Mammary epithelial cell (primary cell): ENCODE measurements at regions of chr15 and their contacts with region 1.

Region 1: GRCh38 chr15:100968050-100968966 is 49.2 kb downstream of the LRRK1 start:
- DNase-seq: peak; percentile 46
- H3K4me3 ChIP-seq: no peak overlapping the region
- H3K27ac ChIP-seq: no peak overlapping the region
- H3K4me1 ChIP-seq: no peaks in the 10 kb centered on the region
- H3K27me3 ChIP-seq: no peaks in the 10 kb centered on the region
- CTCF ChIP-seq: no peak

Region 2: DNA sequence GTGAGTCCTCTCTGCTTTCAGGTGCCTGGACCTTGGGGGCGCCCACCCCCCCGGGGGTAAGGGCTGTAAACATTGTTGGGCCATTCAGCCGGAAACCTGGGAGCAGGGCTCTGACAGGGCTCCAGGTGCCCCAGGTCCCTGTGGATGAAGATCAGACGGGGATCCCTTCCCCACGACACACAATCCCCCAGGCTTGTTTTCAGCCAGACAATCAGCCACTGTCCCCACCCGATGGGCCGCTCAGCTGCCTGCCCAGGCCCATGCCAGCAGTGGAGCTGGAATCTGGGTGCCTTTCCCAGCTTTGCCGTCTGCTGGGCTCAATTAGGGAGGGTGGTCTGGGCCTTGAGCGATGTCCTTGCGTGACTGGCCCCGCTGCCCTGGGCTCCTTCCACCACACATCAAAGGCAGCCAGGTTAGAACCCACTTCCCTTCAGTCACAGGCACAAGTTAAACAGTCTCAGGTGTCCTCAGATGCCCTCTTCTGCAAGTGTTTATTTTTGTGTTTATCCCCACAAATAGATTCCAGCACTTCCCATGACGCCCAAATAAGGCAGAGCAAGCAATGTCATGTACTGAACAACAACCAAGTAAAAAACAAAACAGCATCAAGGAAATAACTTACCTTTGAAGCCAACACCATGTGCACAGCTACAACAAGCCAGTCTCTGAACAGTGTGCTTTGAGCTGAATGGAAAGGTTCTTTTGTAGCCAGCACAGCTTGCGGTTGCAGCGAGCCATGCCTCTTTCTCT is 165.7 kb before region 1 on chr15:
- CTCF ChIA-PET with region 1: no interaction called
- dilution Hi-C with region 1: no loop called
- in situ Hi-C with region 1: no loop called
- intact Hi-C with region 1: no loop called
- DNase-seq: no peak
- H3K4me3 ChIP-seq: no peak overlapping the region
- H3K27ac ChIP-seq: no peak overlapping the region
- H3K4me1 ChIP-seq: no peaks in the 10 kb centered on the region
- H3K27me3 ChIP-seq: no peaks in the 10 kb centered on the region
- CTCF ChIP-seq: no peak

Region 3: DNA sequence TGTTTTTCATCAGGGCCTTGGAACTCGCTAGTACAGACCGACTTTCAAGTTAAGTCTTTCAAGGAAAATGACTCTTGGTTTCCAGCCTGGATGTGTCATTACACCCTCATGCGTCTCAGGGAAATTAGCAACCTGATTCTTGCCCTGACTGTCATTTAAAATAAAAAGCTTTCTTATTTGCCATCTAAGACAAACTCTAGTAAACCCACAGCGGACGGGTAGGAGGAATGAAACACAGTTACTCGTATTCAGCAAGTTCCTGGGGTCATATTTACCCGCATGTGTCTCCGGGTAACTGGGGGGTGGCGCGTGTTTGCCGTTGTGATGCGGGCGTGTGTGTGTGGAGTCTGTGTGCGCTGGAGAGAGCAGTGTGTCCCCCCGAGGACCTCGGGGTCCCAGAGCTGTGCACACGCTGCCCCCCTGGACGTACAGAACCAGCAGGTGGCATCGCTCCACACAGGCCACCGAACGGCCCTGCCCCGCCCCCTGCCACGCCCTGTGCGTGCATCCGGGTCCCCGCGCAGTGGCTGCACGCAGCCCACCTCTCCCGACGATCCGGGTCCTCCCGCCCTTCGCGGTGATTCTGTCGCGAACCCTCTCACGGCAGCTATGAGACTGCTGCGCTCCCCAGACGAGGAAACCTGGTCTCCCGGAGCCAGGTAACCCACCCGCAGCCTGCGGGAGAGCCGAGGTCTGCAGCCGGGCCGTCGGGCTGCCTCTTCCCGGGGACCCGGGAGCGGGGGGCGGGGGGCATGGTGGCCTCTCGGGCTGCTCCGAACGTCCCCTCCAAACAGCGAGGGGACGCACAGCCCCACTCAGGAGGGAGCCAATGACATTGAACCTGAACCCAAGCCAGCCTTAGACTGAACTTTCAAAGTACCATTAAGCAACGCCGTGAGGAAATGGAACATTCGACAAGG is 118.8 kb before region 1 on chr15:
- CTCF ChIA-PET with region 1: no interaction called
- dilution Hi-C with region 1: no loop called
- in situ Hi-C with region 1: no loop called
- intact Hi-C with region 1: no loop called
- DNase-seq: peak; percentile 33
- H3K4me3 ChIP-seq: peak overlapping the region; percentile 60 to 69 (median 63)
- H3K27ac ChIP-seq: peak overlapping the region; percentile 11
- H3K4me1 ChIP-seq: peaks cover 8% of the 10 kb centered on the region
- H3K27me3 ChIP-seq: no peaks in the 10 kb centered on the region
- CTCF ChIP-seq: peak; percentile 15 to 64

Region 4: DNA sequence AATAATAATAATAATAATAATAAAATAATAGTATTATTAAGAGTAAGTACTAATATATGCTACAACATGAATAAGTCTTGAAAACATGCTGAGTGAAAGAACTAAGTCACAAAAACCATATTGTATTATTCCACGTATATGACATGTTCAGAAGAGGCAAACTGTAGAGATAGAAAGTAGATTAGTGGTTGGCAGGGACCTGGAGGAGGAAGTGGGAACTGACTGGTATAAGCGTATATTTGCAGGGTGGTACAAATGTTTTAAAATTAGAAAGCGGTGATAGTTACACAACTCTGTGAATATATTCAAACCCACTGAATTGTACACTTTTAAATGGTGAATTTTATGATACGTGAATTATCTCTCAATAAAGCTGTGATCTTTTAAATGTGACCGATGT is 16.3 kb before region 1 on chr15:
- CTCF ChIA-PET with region 1: no interaction called
- dilution Hi-C with region 1: no loop called
- in situ Hi-C with region 1: no loop called
- intact Hi-C with region 1: loop called (anchors 2 kb)
- DNase-seq: no peak
- H3K4me3 ChIP-seq: no peak overlapping the region
- H3K27ac ChIP-seq: no peak overlapping the region
- H3K4me1 ChIP-seq: no peaks in the 10 kb centered on the region
- H3K27me3 ChIP-seq: no peaks in the 10 kb centered on the region
- CTCF ChIP-seq: no peak